Upper lobe of right lung (tissue), 1 donor: ENCODE measurements at regions of chr11 and their contacts with region 1.

Region 1: GRCh38 chr11:128290106-128290840 is 297.1 kb downstream of the ETS1 start:
- DNase-seq: peak; percentile 67
- ATAC-seq: peak; percentile 93
- H3K4me3 ChIP-seq: peak overlapping the region; percentile 29
- H3K27ac ChIP-seq: peak overlapping the region; percentile 79
- H3K4me1 ChIP-seq: peaks cover 22% of the 10 kb centered on the region
- H3K27me3 ChIP-seq: no peaks in the 10 kb centered on the region
- CTCF ChIP-seq: peak; percentile 87

Region 2: DNA sequence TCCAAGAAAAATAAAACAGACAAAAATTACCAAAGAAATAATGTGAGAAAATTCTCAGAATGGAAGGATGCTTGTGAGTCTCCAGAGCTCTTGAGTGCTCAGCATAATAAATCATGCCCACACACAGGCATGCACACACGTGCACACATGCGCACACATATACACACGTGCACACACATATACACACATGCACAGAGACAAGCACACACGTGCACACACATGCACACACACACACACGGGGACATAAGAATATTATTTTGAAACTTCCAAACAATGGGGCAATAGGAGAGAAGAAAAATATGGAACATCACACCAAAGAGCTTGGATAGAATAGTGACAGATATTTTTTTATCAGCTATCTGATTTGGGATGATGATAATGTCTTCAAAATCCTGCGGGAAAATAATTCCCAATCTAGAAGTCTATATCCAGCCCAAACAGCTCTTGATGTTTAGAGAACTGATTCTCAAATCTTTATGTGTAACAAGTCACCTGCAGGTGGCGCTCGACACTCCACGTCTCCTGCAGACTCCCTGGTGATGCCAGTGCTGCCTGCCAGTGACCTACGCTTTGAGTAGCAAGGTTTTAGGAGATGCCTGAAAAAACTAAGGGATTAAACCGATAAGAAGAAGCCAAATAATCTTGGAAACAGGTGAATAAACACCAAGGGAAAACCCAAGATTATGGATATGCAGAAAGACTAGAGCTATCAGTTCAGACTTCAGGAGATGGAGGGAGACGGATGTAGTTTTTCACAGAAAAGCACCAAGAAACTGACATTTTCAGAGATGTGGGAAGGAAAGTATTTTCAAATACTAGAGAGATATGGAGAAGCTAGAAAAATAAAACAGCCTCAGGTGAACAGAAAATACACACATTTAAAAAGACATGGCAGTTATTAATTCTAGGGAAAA is 446.5 kb before region 1 on chr11:
- intact Hi-C with region 1: no loop called
- DNase-seq: peak; percentile 76
- ATAC-seq: peak; percentile 56
- H3K4me3 ChIP-seq: no peak overlapping the region
- H3K27ac ChIP-seq: no peak overlapping the region
- H3K4me1 ChIP-seq: no peaks in the 10 kb centered on the region
- H3K27me3 ChIP-seq: no peaks in the 10 kb centered on the region
- CTCF ChIP-seq: peak; percentile 60

Region 3: DNA sequence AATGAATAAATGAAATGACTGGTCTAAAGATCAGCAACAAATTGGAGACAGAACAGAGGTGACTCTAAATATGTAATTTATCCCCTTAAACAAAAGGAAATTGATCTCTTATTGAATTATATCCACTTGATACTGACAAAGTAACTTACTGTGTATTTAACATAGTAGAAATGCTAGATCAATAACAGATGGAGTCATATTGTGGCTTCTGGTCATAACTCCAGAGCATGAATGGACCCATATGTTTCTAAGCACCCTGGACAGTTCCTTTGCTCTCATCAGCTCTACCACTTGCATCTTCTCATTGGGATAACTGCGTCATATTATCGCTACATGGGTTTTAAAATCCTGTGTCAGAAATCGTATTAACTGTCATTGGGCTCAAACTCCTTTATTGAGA is 74.8 kb after region 1 on chr11:
- intact Hi-C with region 1: no loop called
- DNase-seq: no peak
- ATAC-seq: no peak
- H3K4me3 ChIP-seq: no peak overlapping the region
- H3K27ac ChIP-seq: no peak overlapping the region
- H3K4me1 ChIP-seq: no peaks in the 10 kb centered on the region
- H3K27me3 ChIP-seq: no peaks in the 10 kb centered on the region
- CTCF ChIP-seq: no peak

Region 4: DNA sequence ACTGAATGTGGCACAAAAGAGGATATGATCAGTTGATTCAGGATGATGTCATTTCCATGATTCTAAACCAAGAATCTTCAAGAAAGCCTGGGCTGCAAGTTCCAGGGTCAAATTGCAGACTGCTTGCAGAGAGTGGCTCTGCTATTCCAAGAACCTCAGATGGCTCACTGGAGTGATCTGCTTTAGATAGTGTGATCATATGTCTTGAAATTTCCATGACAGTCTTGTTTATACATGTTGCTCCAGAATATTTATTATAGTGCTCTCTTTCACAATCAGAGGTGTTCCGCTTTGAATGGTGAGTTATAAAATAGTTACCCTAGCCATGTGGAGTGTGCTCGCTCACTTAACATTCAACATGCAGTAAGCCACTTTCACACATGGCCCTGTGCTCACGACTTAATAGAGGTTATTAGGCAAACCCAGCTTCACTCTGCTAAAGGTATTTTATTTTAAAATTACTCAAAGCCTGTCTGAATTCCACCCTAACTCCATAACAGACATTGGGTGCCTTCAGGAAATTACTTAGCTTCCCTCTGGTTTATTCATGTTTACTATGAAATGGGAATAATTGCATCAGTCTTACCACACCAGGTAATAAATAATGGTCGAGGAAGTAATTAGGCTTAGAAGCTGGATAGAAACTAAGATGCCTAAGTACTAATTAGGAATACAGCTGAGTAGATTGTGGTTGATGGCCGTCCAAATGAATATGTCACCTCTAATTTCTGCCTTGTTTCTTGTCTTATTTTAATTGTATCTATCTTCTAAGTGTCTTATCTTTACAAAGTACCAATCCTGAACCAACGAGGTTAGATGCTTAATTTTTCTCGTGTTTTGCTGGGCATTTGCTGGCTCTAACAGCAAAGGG is 109.2 kb after region 1 on chr11:
- intact Hi-C with region 1: no loop called
- DNase-seq: no peak
- ATAC-seq: no peak
- H3K4me3 ChIP-seq: no peak overlapping the region
- H3K27ac ChIP-seq: no peak overlapping the region
- H3K4me1 ChIP-seq: no peaks in the 10 kb centered on the region
- H3K27me3 ChIP-seq: no peaks in the 10 kb centered on the region
- CTCF ChIP-seq: no peak

Region 5: GRCh38 chr11:128482512-128483191 is 192.4 kb after region 1 on chr11:
- intact Hi-C with region 1: loop called (anchors 10 kb)
- DNase-seq: no peak
- ATAC-seq: peak; percentile 14
- H3K4me3 ChIP-seq: peak overlapping the region; percentile 33
- H3K27ac ChIP-seq: peak overlapping the region; percentile 79
- H3K4me1 ChIP-seq: peaks cover 62% of the 10 kb centered on the region
- H3K27me3 ChIP-seq: no peaks in the 10 kb centered on the region
- CTCF ChIP-seq: no peak